Right ventricle myocardium superior (tissue), 1 donor: ENCODE measurements at regions of chr1 and their contacts with region 1.

Region 1: DNA sequence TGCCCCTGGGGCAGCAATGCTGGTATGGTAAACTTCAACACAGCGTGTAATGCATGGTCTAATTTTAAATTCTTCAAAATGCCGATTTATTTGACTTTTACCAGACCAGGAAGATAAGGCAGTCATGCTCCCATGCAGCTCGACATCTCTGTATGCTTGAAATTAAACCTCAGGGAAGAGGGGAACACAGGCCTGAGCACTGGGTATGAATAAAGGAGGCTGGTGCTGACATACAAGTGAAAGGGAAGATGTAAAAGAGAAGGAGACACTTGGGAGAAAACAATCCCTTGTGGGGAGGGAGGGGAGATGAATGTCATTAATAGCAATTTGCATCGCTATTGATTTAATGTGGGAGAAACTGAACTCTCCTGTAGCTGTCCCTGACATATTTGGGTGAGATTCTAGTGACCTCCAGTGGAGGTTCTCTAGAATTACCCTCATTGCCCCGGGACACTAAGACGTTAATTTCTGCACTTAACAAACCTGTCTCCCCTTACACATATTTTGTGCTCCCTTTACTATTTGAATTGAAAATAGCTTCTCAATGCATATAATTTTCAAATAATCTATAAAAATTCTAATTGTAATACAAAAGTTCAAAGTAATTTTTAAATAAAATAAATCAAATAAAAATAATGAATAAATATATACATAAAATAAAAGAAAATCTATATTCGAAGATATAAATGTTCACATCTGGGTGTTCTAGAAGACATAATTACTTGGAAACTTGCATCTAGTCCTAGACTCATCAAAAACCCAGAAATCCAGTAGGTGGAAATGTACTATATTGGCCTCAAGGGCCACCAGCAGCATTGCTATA is 283.1 kb downstream of the LMX1A start:
- DNase-seq: no peak
- ATAC-seq: peak; percentile 79

Region 2: GRCh38 chr1:163406772-163407171 is 1666.6 kb before region 1 on chr1:
- intact Hi-C with region 1: loop called (anchors 5 kb)
- DNase-seq: no peak
- ATAC-seq: peak; percentile 25

Region 3: DNA sequence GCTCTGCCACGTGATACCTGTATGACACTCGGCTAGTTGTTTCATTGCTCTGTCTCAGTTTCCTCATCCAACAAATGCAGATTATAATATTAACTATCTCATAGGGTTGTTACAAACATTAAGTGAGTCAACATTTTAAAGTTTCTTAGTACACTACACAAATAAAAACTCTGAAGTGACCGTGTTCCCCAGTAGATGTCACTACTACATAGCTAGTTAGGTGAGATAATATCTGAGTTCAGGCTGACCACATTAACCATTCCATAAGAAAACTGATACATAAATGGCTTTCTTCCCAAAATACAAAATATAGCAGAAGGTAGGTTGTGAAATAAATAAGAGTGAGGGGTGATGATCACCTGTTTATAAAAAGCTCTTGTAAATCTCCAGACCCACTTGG is 1537.6 kb before region 1 on chr1:
- intact Hi-C with region 1: loop called (anchors 10 kb)
- DNase-seq: no peak
- ATAC-seq: no peak

Region 4: GRCh38 chr1:163561580-163562295 is 1511.7 kb before region 1 on chr1:
- intact Hi-C with region 1: loop called (anchors 10 kb)
- DNase-seq: no peak
- ATAC-seq: no peak